GM10248 (cell line): ENCODE measurements at regions of chr22 and their contacts with region 1.

Region 1: GRCh38 chr22:19178656-19179496 is at the start of gene SLC25A1:
- DNase-seq: peak; percentile 97
- CTCF ChIP-seq: no peak

Region 2: DNA sequence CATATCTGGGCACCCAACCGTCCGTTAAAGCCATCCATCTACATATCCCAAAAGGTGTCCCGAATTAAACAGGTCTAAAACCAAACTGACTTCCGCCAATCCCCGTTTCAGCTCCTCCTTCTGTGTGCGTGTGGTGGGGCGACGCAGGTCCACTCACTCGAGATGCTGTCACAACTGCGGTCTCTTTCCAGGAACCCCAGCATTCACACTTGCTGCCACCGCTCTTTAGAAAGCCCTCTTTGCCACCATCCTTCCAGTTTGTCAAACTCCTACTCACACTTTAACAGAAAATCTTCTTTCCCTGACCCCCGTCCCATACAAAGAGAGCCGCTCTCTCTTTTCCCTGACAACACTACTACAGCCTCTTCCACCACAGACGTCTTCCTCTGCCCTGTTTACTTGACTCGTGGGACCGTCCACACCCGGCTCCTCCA is 34.9 kb before region 1 on chr22:
- CTCF ChIA-PET with region 1: interaction called, 13 read pairs
- POLR2A ChIA-PET with region 1: interaction called, 3 read pairs
- DNase-seq: no peak
- CTCF ChIP-seq: no peak

Region 3: DNA sequence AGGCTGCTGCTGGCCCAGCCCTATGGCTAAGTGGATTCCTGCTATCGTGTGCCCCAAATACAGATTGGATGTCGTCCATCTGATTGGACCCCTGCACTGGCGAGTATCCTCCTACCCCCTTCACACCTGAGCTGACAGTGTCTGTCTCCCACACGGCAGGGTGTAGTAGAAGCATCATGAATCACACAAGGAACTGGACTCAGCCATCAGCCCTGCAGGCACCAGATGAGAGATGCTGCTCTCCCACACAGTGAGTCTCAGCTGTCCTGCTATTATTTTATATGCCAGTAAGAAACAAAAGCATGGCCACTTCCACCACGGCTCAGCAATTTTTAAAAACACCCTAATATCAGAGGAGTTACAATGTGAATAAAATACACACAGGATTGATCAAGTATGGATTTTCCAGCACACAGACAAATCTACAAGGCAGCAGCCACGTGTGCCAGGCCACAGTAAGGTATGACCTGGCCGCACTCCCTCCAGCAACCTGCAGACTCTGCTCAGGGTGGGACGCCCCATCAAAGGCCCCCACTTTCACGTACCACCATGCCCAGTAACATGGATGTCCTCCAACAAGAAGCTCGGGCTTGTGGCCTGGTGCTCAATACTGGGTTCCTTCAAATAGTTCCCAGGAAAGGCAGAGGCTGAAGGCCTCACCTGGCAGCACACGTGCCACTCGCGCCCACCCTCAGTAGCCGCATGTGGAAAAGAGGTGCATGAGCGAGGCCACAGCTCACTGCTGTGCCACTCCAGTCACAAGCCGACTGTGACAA is 16.1 kb after region 1 on chr22:
- CTCF ChIA-PET with region 1: interaction called, 11 read pairs
- POLR2A ChIA-PET with region 1: no interaction called
- DNase-seq: no peak
- CTCF ChIP-seq: no peak

Region 4: DNA sequence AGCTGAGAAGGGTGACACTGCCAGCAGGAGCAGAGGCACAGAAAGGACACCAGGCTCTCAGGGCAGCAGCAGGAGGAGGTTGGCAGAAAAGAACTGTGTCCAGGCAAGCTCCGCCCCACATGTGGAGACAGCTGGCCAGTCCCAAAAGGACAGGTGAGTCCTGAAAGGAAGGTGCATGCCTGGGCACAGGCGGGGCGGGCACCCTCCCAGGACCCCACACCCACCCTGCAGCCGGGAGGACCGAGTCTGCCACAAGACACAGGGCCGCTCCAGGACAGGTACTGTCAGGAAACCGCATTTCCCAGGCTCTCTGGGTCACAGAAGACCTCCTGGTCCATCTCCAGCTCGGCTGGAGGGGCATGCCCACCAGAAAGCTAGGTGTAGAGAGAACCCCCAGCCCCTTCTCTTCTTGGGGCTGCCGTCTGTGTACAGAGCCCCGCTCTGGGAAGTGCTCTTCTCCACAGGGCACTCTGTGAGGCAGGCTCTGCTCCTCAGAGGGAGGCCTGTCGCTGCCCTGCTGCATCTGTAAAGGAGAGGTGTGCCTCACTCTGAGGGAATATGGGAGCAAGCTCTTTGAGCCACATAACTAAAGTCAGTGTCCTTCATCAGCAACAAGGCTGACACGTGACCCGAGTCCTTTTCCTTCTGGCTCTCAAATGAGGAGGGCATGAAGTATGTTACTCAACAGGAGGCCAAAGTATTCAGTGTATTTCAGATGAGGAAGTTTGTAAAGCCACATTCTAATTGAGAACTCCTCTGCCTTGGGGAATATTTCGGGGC is 62.1 kb after region 1 on chr22:
- CTCF ChIA-PET with region 1: no interaction called
- POLR2A ChIA-PET with region 1: no interaction called
- DNase-seq: no peak
- CTCF ChIP-seq: no peak

Region 5: DNA sequence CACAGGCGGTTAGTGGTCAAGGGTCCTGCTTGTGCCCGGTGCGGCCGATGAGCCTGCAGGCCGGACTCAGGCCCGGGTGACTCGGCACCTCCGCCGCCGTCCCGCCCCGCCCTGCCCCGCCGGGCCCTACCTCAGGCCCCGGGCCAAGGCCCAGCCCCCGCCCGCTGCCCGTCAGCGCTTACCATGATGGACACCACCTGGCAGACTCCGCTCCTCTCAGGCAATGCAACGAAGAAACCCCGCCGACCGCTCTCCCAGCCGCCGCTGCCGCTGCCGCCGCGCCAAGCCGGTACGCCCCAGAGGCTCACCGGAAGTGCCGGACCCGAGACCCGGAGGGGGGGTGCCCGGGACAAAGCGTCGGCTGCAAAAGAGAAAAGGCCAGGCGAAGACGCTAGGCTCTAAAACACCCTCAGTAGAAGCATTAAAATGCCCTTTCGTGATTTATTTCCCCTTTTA is 300.1 kb after region 1 on chr22 and contains the start of gene UFD1:
- CTCF ChIA-PET with region 1: interaction called, 16 read pairs
- POLR2A ChIA-PET with region 1: interaction called, 6 read pairs
- DNase-seq: peak; percentile 85
- CTCF ChIP-seq: no peak